ENCODE measurements at regions of chr20 and their contacts with region 1.

Region 1: GRCh38 chr20:35541783-35542588 is at the start of gene ERGIC3:
- DNase-seq: peak; percentile 98
- ATAC-seq: peak; percentile 99 to 100 (median 100)
- H3K4me3 ChIP-seq: peak within 1 kb of the TSS; percentile 71 to 95 (median 85)
- H3K27ac ChIP-seq: peak within 1 kb of the TSS in 9 of 10 donors; percentile 59 to 89 (median 76)
- H3K4me1 ChIP-seq: peaks cover 0 to 23% (median 15%) of the 10 kb centered on the region in 9 donors
- H3K27me3 ChIP-seq: no peaks in the 10 kb centered on the region
- CTCF ChIP-seq: peak in 4 of 9 donors; percentile 7 to 26 (median 21)
- total RNA-seq, gene ERGIC3: 40.9 to 143 (median 102) TPM

Region 2: GRCh38 chr20:35619196-35620095 is 77.5 kb after region 1 on chr20:
- intact Hi-C with region 1: loop called in 1 of 10 experiments (anchors 5 kb)
- DNase-seq: peak; percentile 79 to 83
- ATAC-seq: peak in 7 of 8 donors; percentile 10 to 48 (median 25)
- H3K4me3 ChIP-seq: peak overlapping the region; percentile 23 to 80 (median 54)
- H3K27ac ChIP-seq: peak overlapping the region in 4 of 10 donors; percentile 19 to 94 (median 46)
- H3K4me1 ChIP-seq: peaks cover 19 to 44% (median 36%) of the 10 kb centered on the region in 9 donors
- H3K27me3 ChIP-seq: peaks cover 0 to 7% (median 0%) of the 10 kb centered on the region in 7 donors
- CTCF ChIP-seq: peak in 4 of 9 donors; percentile 35 to 45 (median 40)

Measured in heart right ventricle (tissue), 16 donors.